Activated naive CD4-positive, alpha-beta T cell treated with anti-CD3 and anti-CD28 coated beads, Interleukin-2, amount 10 ng/mL, durations not matched to agents 7 days and 5 days (primary cell): ENCODE measurements at regions of chr21 and their contacts with region 1.

Region 1: GRCh38 chr21:33947451-33948095 is 32.0 kb upstream of the ATP5PO start:
- DNase-seq: peak; percentile 91
- H3K4me3 Mint-ChIP-seq: peak overlapping the region; percentile 62
- H3K27ac Mint-ChIP-seq: peak overlapping the region; percentile 99
- H3K4me1 Mint-ChIP-seq: peaks cover 79% of the 10 kb centered on the region
- H3K27me3 Mint-ChIP-seq: no peaks in the 10 kb centered on the region

Region 2: DNA sequence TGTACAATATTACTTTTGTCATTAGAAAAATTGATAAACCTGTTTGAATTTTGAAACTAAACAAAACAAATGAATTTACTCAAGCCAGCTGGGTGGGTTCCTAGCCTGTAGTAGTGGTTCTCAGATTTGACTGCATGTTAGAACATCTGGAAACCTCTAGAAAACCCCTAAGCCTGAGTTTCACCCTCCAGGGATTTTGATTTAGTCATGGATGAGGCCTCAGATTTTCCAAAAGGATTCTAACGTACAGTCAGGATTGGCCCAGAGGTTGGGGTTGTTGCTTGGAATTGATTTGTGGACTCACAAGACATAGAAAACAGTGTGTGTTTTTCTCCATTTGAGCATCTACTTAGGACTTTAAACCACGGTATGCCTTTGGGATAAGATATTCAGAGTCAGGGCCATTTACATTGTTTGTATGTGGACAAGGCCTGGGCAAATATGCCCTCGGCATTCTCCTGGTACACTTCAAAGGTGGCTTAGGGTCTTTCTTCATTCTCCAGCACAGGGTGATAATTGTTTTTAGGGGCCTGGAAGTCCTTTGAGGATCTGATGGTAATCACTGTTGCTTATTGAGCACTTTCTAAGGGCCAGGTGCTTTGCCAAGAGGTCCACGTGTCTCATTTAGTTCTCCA is 74.6 kb before region 1 on chr21:
- CTCF ChIA-PET with region 1: no interaction called
- DNase-seq: no peak
- H3K4me3 Mint-ChIP-seq: no peak overlapping the region
- H3K27ac Mint-ChIP-seq: no peak overlapping the region
- H3K4me1 Mint-ChIP-seq: no peaks in the 10 kb centered on the region
- H3K27me3 Mint-ChIP-seq: peaks cover 12% of the 10 kb centered on the region

Region 3: GRCh38 chr21:33936301-33937038 is 11.1 kb before region 1 on chr21:
- CTCF ChIA-PET with region 1: interaction called, 25 read pairs
- DNase-seq: peak; percentile 45
- H3K4me3 Mint-ChIP-seq: peak overlapping the region; percentile 47
- H3K27ac Mint-ChIP-seq: peak overlapping the region; percentile 97
- H3K4me1 Mint-ChIP-seq: peaks cover 88% of the 10 kb centered on the region
- H3K27me3 Mint-ChIP-seq: no peaks in the 10 kb centered on the region

Region 4: DNA sequence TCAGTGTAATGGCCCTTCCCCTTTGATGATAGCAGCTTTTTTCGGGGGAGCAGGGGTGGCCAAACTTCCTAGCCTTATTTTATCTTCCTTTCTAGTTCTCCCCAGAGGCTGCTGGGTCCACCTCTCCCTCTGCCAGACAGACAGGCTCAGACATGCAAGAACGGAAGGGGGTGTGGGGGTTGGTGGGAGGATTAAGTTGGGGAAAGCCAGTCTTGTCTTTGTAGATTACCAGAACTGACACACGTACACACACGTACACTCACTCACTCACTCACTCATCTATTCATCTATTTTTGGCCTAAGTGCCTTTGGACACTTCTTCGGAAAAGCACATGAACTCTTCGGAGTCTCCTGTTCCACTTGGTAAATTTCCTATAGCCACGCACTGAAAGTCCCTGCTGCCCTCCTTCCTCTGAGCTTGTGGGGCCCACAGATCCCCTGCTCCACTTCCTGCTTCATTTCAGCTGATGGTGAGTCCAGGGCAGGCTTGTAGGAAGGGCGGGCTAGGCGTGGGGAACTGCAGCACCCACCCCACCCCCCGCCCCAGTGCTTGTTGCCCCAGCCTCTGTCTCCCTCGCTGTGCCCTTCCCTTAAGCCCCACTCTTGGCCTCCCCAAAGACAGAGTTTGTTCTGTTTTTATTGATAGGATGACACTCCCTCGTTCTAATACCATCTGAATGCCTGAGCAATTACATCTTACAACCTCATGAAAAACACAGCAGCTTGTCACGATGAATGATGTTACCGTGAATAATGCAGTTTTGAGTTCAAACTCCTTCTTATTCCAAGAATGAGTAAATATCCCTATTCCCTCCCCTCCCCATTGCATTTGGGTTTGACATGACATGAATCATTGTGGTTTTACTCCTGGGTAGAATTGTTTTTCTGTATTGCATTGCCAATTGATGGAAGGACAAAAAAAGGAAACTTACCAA is 28.8 kb after region 1 on chr21:
- CTCF ChIA-PET with region 1: interaction called, 16 read pairs
- DNase-seq: peak; percentile 60
- H3K4me3 Mint-ChIP-seq: peak overlapping the region; percentile 37
- H3K27ac Mint-ChIP-seq: peak overlapping the region; percentile 88
- H3K4me1 Mint-ChIP-seq: peaks cover 57% of the 10 kb centered on the region
- H3K27me3 Mint-ChIP-seq: no peaks in the 10 kb centered on the region

Region 5: GRCh38 chr21:34078915-34079314 is 131.3 kb after region 1 on chr21:
- CTCF ChIA-PET with region 1: interaction called, 27 read pairs
- DNase-seq: peak; percentile 58
- H3K4me3 Mint-ChIP-seq: peak overlapping the region; percentile 21
- H3K27ac Mint-ChIP-seq: peak overlapping the region; percentile 77
- H3K4me1 Mint-ChIP-seq: peaks cover 93% of the 10 kb centered on the region
- H3K27me3 Mint-ChIP-seq: peaks cover 3% of the 10 kb centered on the region

Region 6: DNA sequence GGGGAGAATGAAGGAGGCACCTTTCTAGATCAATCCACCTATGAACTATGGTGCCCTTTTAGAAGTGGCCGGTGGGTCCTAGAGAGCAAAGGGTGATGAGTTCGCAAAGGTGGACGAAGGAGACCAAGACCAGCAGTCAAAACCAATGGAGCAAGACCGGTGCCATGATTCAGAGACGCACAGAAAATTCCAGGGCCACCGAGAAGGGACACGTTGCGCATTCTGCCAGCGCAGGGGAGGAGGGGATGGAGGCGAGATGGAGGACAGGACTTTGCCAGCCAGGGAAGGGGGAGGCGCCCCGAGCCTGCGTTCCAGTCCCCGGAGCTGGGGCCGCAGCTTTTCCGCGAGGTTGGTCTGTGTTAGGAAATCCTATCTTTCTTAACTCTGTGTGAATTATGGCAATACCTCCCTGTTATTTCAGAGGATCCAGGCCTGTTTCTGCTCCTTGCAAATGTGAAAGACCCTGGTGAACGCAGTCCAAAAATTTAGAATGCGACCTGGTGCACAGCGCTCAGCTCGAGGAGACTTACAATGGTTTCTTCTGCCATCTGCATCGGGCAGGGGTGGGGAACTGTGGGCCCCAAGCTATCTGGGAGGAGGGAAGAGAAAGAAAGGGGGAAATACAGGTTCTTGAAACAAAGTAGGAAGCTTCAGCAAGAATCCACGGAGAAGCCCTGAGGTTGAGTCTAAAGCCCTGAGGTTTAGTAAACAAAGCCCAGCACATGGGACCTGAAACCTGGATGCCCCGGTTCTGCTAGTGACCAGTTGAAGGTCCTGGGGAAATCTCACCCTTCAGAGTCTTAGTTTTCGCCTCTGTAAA is 255.2 kb after region 1 on chr21:
- CTCF ChIA-PET with region 1: interaction called, 10 read pairs
- DNase-seq: no peak
- H3K4me3 Mint-ChIP-seq: peak overlapping the region; percentile 45
- H3K27ac Mint-ChIP-seq: no peak overlapping the region
- H3K4me1 Mint-ChIP-seq: peaks cover 46% of the 10 kb centered on the region
- H3K27me3 Mint-ChIP-seq: peaks cover 9% of the 10 kb centered on the region